Adrenal gland (tissue), 19 donors: ENCODE measurements at regions of chr1 and their contacts with region 1.

Region 1: DNA sequence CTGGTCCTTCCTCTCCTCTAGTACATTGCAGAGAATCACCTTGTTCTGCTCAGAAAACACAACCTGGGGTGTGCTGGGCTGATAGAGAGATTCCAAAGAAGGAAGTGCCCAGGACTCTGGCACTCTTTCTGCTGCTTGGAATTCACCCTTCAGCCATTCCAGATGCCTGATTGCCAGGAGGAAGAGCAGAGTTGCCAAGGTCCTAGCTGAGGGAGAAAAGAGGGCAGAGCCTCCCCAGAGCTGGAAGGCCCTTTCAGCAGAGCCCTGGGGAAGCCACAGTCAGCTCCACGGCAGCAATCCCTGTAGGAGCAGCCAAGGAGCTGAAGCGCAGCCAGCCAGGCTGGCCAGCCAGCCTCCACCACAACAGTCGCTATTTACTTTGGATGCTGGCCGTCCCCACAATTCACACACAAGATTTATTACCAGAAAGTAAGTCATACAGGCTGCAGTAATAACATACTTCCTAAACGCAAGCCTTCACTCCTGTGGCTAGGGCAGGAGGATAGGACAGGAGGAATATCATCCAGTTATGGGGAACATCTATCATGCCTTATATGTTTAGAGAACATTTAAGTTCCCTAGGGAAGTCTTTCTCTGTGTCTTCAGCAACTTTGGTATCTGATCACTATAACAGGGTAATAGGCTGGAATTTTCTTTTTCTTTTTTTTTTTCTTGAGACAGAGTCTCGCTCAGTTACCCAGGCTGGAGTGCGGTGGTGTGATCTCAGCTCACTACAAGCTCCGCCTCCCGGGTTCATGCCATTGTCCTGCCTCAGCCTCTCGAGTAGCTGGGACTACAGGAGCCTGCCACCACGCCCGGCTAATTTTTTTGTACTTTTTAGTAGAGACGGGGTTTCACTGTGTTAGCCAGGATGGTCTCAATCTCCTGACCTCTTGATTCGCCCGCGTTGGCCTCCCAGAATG is 36.6 kb upstream of the SLC44A3 start:
- DNase-seq: peak; percentile 57 to 83 (median 66)
- H3K4me3 ChIP-seq: peak overlapping the region in 1 of 4 donors; percentile 12
- H3K27ac ChIP-seq: peak overlapping the region in 4 of 5 donors; percentile 1 to 68 (median 32)
- H3K4me1 ChIP-seq: peaks cover 7 to 18% of the 10 kb centered on the region in 2 donors
- H3K27me3 ChIP-seq: no peaks in the 10 kb centered on the region
- CTCF ChIP-seq: no peak
- POLR2A ChIP-seq: no peak

Region 2: GRCh38 chr1:94636624-94637023 is 147.0 kb before region 1 on chr1:
- intact Hi-C with region 1: no loop called
- DNase-seq: no peak
- H3K4me3 ChIP-seq: no peak overlapping the region
- H3K27ac ChIP-seq: no peak overlapping the region
- H3K4me1 ChIP-seq: no peaks in the 10 kb centered on the region
- H3K27me3 ChIP-seq: no peaks in the 10 kb centered on the region
- CTCF ChIP-seq: no peak
- POLR2A ChIP-seq: no peak

Region 3: GRCh38 chr1:94734963-94735899 is 48.4 kb before region 1 on chr1:
- intact Hi-C with region 1: loop called in 1 of 2 experiments (anchors 10 kb)
- DNase-seq: peak; percentile 52 to 74 (median 62)
- H3K4me3 ChIP-seq: peak overlapping the region in 1 of 4 donors; percentile 13
- H3K27ac ChIP-seq: peak overlapping the region in 4 of 5 donors; percentile 12 to 66 (median 56)
- H3K4me1 ChIP-seq: peaks cover 0 to 22% of the 10 kb centered on the region in 2 donors
- H3K27me3 ChIP-seq: no peaks in the 10 kb centered on the region
- CTCF ChIP-seq: no peak
- POLR2A ChIP-seq: no peak

Region 4: GRCh38 chr1:95127380-95127779 is 343.8 kb after region 1 on chr1:
- intact Hi-C with region 1: no loop called
- DNase-seq: no peak
- H3K4me3 ChIP-seq: no peak overlapping the region
- H3K27ac ChIP-seq: no peak overlapping the region
- H3K4me1 ChIP-seq: no peaks in the 10 kb centered on the region
- H3K27me3 ChIP-seq: no peaks in the 10 kb centered on the region
- CTCF ChIP-seq: no peak
- POLR2A ChIP-seq: no peak

Region 5: DNA sequence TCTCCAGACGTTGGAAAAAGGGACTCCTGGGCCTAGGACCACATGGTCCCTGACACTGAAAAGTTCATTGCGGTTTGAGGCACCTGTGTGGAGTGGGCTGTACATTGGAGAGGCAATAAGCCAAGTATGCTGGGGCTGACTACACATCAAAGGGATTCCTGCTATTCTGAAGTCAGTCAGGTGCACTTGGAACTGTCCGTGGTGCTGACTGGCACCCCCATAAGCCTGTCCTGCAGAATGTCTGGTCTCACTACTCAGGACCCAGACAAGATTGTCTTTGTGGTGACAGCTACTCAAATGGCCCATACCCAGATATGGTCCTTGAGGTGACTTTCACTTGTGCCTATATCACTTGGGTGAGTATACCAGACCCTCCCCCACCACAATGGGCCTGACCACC is 601.0 kb after region 1 on chr1:
- intact Hi-C with region 1: no loop called
- DNase-seq: peak in 2 of 7 donors; percentile 9 to 18
- H3K4me3 ChIP-seq: no peak overlapping the region
- H3K27ac ChIP-seq: no peak overlapping the region
- H3K4me1 ChIP-seq: no peaks in the 10 kb centered on the region
- H3K27me3 ChIP-seq: no peaks in the 10 kb centered on the region
- CTCF ChIP-seq: no peak
- POLR2A ChIP-seq: no peak